ENCODE measurements at regions of chr15 and their contacts with region 1.

Region 1: GRCh38 chr15:49855917-49856637 is 235.2 kb downstream of the DTWD1 start:
- DNase-seq: no peak
- H3K4me3 ChIP-seq: no peak overlapping the region
- H3K27ac ChIP-seq: peak overlapping the region; percentile 42 to 44
- H3K4me1 ChIP-seq: peaks cover 0 to 6% of the 10 kb centered on the region in 2 donors
- H3K27me3 ChIP-seq: no peaks in the 10 kb centered on the region
- CTCF ChIP-seq: no peak

Region 2: DNA sequence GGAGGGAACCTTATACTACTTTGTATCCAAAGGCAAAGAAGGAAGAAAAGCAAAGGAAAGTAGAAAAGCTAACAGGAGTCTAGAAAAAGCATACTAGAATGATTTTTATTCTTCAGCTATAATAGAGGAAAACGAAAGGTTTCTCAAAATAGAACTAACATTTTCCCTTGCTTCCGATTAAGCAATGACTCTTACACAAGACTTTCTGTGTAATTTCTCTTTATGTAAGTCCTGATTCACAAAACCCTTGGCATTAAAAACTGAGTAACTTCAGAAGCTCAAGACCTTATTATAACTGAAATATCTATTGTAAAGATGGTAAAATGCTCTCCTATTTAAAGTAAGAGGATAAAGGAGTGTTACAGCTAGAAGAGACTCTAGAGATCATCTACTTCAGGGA is 137.8 kb before region 1 on chr15:
- intact Hi-C with region 1: loop called (anchors 2 kb)
- DNase-seq: no peak
- H3K4me3 ChIP-seq: peak overlapping the region; percentile 3 to 31
- H3K27ac ChIP-seq: peak overlapping the region; percentile 73 to 83
- H3K4me1 ChIP-seq: peaks cover 0 to 17% of the 10 kb centered on the region in 2 donors
- H3K27me3 ChIP-seq: no peaks in the 10 kb centered on the region
- CTCF ChIP-seq: no peak

Region 3: GRCh38 chr15:49901996-49902684 is 46.1 kb after region 1 on chr15:
- intact Hi-C with region 1: loop called (anchors 5 kb)
- DNase-seq: no peak
- H3K4me3 ChIP-seq: peak overlapping the region in 1 of 2 donors; percentile 4
- H3K27ac ChIP-seq: peak overlapping the region; percentile 83 to 84
- H3K4me1 ChIP-seq: peaks cover 5 to 12% of the 10 kb centered on the region in 2 donors
- H3K27me3 ChIP-seq: no peaks in the 10 kb centered on the region
- CTCF ChIP-seq: peak in 2 of 3 experiments; percentile 11 to 12